Activated CD4-positive, alpha-beta T cell treated with anti-CD3 and anti-CD28 coated beads for 36 hours (primary cell): ENCODE measurements at regions of chr17 and their contacts with region 1.

Region 1: GRCh38 chr17:5249615-5250014 is 15.0 kb upstream of the SCIMP start:
- DNase-seq: peak; percentile 80
- ATAC-seq: peak; percentile 91
- H3K4me3 Mint-ChIP-seq: no peak overlapping the region
- H3K27ac Mint-ChIP-seq: no peak overlapping the region
- H3K4me1 Mint-ChIP-seq: peaks cover 8% of the 10 kb centered on the region
- H3K27me3 Mint-ChIP-seq: no peaks in the 10 kb centered on the region

Region 2: DNA sequence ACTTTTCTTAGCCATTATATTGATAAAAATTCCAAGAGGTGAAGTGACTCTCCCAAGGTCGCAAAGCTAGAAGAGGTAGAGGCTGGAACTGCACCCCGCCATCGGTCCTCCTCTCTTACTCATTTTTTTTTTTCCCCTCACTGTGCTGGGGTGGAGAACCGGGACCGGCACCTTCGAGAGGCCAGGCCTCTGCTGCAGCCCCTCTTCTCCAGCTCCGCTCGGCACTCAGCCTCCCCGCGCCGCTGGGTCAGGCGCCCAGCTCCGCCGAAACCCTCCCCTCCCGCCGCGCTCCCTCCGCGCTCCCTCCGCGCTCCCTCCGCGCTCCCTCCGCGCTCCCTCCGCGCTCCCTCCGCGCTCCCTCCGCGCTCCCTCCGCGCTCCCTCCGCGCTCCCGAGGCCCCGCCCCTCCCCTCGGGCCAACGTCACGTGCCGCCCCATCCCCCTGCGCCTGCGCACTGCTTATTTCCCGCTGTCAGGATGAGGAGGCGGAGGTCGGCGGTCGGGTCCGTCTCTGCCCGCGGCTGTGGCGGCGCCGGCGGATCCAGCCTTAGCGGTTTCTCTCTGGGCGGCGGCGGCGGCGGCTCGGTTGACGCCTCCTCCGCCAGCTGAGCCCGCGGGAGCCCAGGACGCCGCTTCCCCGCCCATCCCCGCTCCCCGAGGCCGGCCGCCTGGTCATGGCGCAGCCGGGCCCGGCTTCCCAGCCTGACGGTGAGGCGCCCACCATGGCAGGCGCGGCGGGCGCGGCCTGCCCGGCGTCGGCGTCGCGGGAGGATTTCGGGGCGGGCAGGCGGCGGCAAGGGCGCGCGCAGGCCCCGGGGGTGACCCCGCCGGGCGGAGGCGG is 32.4 kb after region 1 on chr17 and contains the start of gene RABEP1:
- CTCF ChIA-PET with region 1: no interaction called
- POLR2A ChIA-PET with region 1: no interaction called
- intact Hi-C with region 1: loop called in 1 of 2 experiments (anchors 1 kb)
- DNase-seq: peak; percentile 97
- ATAC-seq: peak; percentile 81
- H3K4me3 Mint-ChIP-seq: peak within 1 kb of the TSS; percentile 86
- H3K27ac Mint-ChIP-seq: peak within 1 kb of the TSS; percentile 90
- H3K4me1 Mint-ChIP-seq: peaks cover 32% of the 10 kb centered on the region
- H3K27me3 Mint-ChIP-seq: no peaks in the 10 kb centered on the region
- total RNA-seq, gene RABEP1: 60.4 to 66.2 TPM

Region 3: DNA sequence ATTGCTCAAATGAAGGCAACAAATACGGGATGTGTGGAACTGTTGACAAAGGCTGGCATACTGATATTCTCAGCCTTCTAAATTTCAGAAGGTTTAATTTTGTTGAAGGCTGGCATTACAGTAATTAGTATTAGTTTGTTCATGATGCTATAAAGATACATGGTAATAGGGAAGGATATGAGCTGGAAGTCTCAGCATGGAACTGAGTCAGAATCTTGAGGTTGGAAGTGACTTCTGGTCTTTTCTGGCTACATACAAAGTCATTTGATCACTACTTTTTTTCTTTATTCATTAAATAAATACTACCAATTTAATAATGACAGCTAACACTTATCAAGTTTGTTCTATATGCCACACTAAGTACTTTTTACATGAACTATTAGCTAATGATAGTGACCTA is 55.0 kb after region 1 on chr17:
- CTCF ChIA-PET with region 1: interaction called, 7 read pairs
- POLR2A ChIA-PET with region 1: interaction called, 3 read pairs
- intact Hi-C with region 1: loop called (anchors 1 kb)
- DNase-seq: no peak
- ATAC-seq: no peak
- H3K4me3 Mint-ChIP-seq: no peak overlapping the region
- H3K27ac Mint-ChIP-seq: no peak overlapping the region
- H3K4me1 Mint-ChIP-seq: peaks cover 41% of the 10 kb centered on the region
- H3K27me3 Mint-ChIP-seq: no peaks in the 10 kb centered on the region

Region 4: DNA sequence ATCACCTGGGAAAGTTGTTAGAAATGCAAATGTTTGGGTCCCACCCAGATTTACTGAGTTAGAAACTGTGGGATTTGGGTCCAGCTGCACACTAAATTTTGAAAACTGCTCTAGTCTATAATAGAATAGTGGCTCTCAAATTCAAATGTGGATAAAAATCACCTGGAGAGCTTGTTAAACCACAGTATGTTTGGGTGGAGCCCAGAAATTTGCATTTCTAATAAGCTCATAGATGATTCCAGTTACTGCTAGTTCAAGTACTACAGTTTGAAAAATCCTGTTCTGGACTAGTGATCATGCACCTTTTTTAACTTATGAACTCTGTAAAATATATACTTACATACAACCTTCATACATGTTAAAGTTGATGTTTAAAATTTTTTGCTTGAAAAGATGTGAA is 60.2 kb after region 1 on chr17:
- CTCF ChIA-PET with region 1: interaction called, 12 read pairs
- POLR2A ChIA-PET with region 1: no interaction called
- intact Hi-C with region 1: loop called (anchors 1 kb)
- DNase-seq: no peak
- ATAC-seq: no peak
- H3K4me3 Mint-ChIP-seq: no peak overlapping the region
- H3K27ac Mint-ChIP-seq: no peak overlapping the region
- H3K4me1 Mint-ChIP-seq: peaks cover 27% of the 10 kb centered on the region
- H3K27me3 Mint-ChIP-seq: no peaks in the 10 kb centered on the region

Region 5: DNA sequence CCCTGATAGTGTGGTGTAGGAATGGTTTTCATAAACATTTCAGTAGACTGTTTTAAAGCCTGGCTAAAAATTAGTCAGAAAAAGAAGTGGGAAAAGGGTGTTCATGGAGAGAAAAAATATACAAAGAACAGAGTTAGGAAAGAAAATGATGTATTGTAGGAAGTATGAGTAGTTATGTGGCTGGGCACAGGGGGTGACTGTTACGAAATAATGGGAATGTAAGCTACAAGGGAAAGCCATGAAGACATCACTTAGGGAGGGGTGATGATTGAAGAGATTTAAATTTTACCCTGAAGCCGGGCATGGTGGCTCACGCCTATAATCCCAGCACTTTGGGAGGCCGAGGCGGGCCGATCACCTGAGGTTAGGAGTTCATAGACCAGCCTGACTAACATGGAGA is 114.5 kb after region 1 on chr17:
- CTCF ChIA-PET with region 1: interaction called, 4 read pairs
- POLR2A ChIA-PET with region 1: interaction called, 5 read pairs
- intact Hi-C with region 1: loop called in 1 of 2 experiments (anchors 5 kb)
- DNase-seq: no peak
- ATAC-seq: no peak
- H3K4me3 Mint-ChIP-seq: no peak overlapping the region
- H3K27ac Mint-ChIP-seq: peak overlapping the region; percentile 38
- H3K4me1 Mint-ChIP-seq: no peaks in the 10 kb centered on the region
- H3K27me3 Mint-ChIP-seq: no peaks in the 10 kb centered on the region

Region 6: DNA sequence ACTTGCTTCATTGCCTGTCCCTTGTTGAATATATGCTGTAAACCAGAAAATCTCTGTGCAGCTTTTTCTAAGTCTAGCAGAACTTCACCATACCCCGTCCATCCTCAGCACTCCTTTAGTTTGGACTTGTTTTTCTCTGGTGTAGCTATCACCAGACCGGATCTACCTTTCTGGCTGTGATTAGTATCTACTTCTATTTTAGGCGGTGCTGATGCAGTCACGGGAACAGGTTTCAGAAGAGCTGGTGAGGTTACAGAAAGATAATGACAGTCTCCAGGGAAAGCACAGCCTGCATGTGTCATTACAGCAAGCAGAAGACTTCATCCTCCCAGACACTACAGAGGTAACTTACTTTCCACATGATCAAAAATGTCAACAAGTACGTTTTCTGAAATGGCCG is 123.5 kb after region 1 on chr17:
- CTCF ChIA-PET with region 1: interaction called, 3 read pairs
- POLR2A ChIA-PET with region 1: no interaction called
- intact Hi-C with region 1: loop called in 1 of 2 experiments (anchors 10 kb)
- DNase-seq: no peak
- ATAC-seq: no peak
- H3K4me3 Mint-ChIP-seq: no peak overlapping the region
- H3K27ac Mint-ChIP-seq: no peak overlapping the region
- H3K4me1 Mint-ChIP-seq: no peaks in the 10 kb centered on the region
- H3K27me3 Mint-ChIP-seq: no peaks in the 10 kb centered on the region